ENCODE measurements at regions of chr14 and their contacts with region 1.

Region 1: DNA sequence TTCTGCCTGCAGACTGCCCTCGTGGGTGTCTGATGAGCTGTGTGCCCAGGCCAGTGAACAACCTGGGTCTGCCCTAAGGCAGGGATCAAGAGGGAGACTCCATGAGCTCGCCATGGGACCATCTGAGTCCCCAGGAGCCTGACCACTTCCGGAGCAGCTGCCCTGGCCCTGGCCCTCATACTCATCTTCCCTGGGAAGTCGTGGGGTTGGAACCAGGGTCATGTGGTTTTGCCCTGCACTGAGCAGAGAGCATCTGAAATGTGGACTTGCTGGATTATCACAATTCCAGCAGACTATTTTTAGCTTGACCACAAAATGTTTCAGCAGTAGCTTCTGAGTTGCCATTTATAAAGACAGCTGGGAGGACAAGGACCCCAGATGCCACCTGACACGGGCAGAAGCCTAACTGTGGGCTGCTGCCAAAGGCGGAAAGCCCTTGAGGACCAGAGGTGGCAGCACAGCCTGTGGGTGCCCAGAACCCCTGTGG is 6.7 kb downstream of the BTBD6 start:
- DNase-seq: no peak
- ATAC-seq: no peak
- H3K4me3 ChIP-seq: no peak overlapping the region
- H3K4me3 Mint-ChIP-seq: no peak overlapping the region
- H3K27ac ChIP-seq: no peak overlapping the region
- H3K27ac Mint-ChIP-seq: no peak overlapping the region
- H3K4me1 ChIP-seq: peaks cover 4% of the 10 kb centered on the region
- H3K4me1 Mint-ChIP-seq: peaks cover 0 to 8% of the 10 kb centered on the region in 2 donors
- H3K27me3 ChIP-seq: no peaks in the 10 kb centered on the region
- H3K27me3 Mint-ChIP-seq: no peaks in the 10 kb centered on the region
- CTCF ChIP-seq: no peak

Region 2: GRCh38 chr14:105168979-105169507 is 86.0 kb before region 1 on chr14:
- intact Hi-C with region 1: no loop called
- DNase-seq: peak; percentile 40 to 63
- ATAC-seq: peak; percentile 56 to 73 (median 70)
- H3K4me3 ChIP-seq: no peak overlapping the region
- H3K4me3 Mint-ChIP-seq: peak overlapping the region; percentile 70
- H3K27ac ChIP-seq: no peak overlapping the region
- H3K27ac Mint-ChIP-seq: peak overlapping the region in 1 of 2 donors; percentile 29
- H3K4me1 ChIP-seq: peaks cover 33% of the 10 kb centered on the region
- H3K4me1 Mint-ChIP-seq: peaks cover 4 to 21% of the 10 kb centered on the region in 2 donors
- H3K27me3 ChIP-seq: peaks cover 23% of the 10 kb centered on the region
- H3K27me3 Mint-ChIP-seq: peaks cover 0 to 19% of the 10 kb centered on the region in 2 donors
- CTCF ChIP-seq: peak; percentile 58

Region 3: DNA sequence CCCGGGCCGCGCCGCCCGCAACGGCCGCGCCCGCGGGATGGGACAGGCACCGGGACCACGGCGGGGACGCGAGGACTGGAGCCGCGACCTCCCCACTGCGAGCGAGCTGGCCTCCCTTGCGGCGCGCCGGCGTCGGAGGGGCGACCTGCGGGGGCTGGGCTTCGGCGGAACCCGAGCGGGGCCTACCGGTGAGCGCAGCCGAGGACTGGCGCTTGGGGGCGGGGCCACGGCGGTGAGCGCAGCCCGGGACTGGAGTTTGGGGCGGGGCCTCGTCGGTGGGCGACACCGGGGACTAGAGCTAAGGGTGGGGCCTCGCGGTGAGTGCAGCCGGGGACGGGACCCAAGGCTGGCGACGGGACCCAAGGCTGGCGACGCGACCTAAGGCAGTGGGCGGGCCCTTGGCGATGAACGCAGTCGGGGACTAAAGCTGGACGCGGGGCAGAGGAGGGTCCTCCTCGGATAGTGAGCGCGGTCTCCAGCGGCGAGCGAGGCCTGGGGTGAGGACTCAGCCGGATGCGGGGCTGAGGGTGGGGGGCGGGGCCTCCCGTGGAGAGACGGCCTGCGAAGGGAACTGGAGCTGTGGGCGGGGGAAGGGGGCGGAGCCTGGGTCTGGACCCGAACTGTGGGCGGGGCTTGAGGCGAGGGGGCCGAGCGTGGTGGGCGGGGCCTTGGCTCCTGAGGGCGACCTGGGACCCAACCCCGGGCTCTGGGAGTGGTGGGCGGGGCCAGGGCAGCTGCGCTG is 45.9 kb after region 1 on chr14 and contains the start of gene BRF1:
- intact Hi-C with region 1: loop called (anchors 10 kb)
- DNase-seq: peak; percentile 97 to 98
- ATAC-seq: peak; percentile 87 to 95 (median 88)
- H3K4me3 ChIP-seq: peak within 1 kb of the TSS; percentile 71
- H3K4me3 Mint-ChIP-seq: peak within 1 kb of the TSS; percentile 94
- H3K27ac ChIP-seq: peak within 1 kb of the TSS; percentile 92
- H3K27ac Mint-ChIP-seq: peak within 1 kb of the TSS; percentile 81 to 93
- H3K4me1 ChIP-seq: peaks cover 31% of the 10 kb centered on the region
- H3K4me1 Mint-ChIP-seq: peaks cover 34% of the 10 kb centered on the region in 2 donors
- H3K27me3 ChIP-seq: no peaks in the 10 kb centered on the region
- H3K27me3 Mint-ChIP-seq: no peaks in the 10 kb centered on the region
- CTCF ChIP-seq: no peak
- total RNA-seq, gene BRF1: 82.4 to 92.7 (median 87.4) TPM